CD4-positive, alpha-beta T cell (primary cell): ENCODE measurements at regions of chr3 and their contacts with region 1.

Region 1: GRCh38 chr3:105686278-105686897 is 182.4 kb downstream of the CBLB start:
- DNase-seq: peak in 3 of 14 experiments; percentile 52 to 59 (median 58)
- ATAC-seq: peak; percentile 57
- H3K4me3 ChIP-seq: no peak overlapping the region
- H3K4me3 Mint-ChIP-seq: no peak overlapping the region
- H3K27ac ChIP-seq: no peak overlapping the region
- H3K27ac Mint-ChIP-seq: peak overlapping the region; percentile 61
- H3K4me1 ChIP-seq: no peaks in the 10 kb centered on the region
- H3K4me1 Mint-ChIP-seq: peaks cover 28% of the 10 kb centered on the region
- H3K27me3 ChIP-seq: no peaks in the 10 kb centered on the region
- H3K27me3 Mint-ChIP-seq: no peaks in the 10 kb centered on the region
- CTCF ChIP-seq: peak; percentile 95

Region 2: GRCh38 chr3:105580296-105580965 is 106.0 kb before region 1 on chr3:
- CTCF ChIA-PET with region 1: no interaction called
- POLR2A ChIA-PET with region 1: no interaction called
- intact Hi-C with region 1: no loop called
- DNase-seq: no peak
- ATAC-seq: no peak
- H3K4me3 ChIP-seq: no peak overlapping the region
- H3K4me3 Mint-ChIP-seq: no peak overlapping the region
- H3K27ac ChIP-seq: no peak overlapping the region
- H3K27ac Mint-ChIP-seq: no peak overlapping the region
- H3K4me1 ChIP-seq: no peaks in the 10 kb centered on the region
- H3K4me1 Mint-ChIP-seq: no peaks in the 10 kb centered on the region
- H3K27me3 ChIP-seq: no peaks in the 10 kb centered on the region
- H3K27me3 Mint-ChIP-seq: no peaks in the 10 kb centered on the region
- CTCF ChIP-seq: no peak

Region 3: GRCh38 chr3:105674437-105675065 is 11.8 kb before region 1 on chr3:
- CTCF ChIA-PET with region 1: no interaction called
- POLR2A ChIA-PET with region 1: no interaction called
- intact Hi-C with region 1: no loop called
- DNase-seq: no peak
- ATAC-seq: no peak
- H3K4me3 ChIP-seq: no peak overlapping the region
- H3K4me3 Mint-ChIP-seq: no peak overlapping the region
- H3K27ac ChIP-seq: no peak overlapping the region
- H3K27ac Mint-ChIP-seq: peak overlapping the region; percentile 51
- H3K4me1 ChIP-seq: no peaks in the 10 kb centered on the region
- H3K4me1 Mint-ChIP-seq: peaks cover 6% of the 10 kb centered on the region
- H3K27me3 ChIP-seq: no peaks in the 10 kb centered on the region
- H3K27me3 Mint-ChIP-seq: no peaks in the 10 kb centered on the region
- CTCF ChIP-seq: no peak

Region 4: GRCh38 chr3:105704726-105705410 is 18.5 kb after region 1 on chr3:
- CTCF ChIA-PET with region 1: no interaction called
- POLR2A ChIA-PET with region 1: no interaction called
- intact Hi-C with region 1: no loop called
- DNase-seq: no peak
- ATAC-seq: no peak
- H3K4me3 ChIP-seq: no peak overlapping the region
- H3K4me3 Mint-ChIP-seq: no peak overlapping the region
- H3K27ac ChIP-seq: no peak overlapping the region
- H3K27ac Mint-ChIP-seq: peak overlapping the region; percentile 1
- H3K4me1 ChIP-seq: no peaks in the 10 kb centered on the region
- H3K4me1 Mint-ChIP-seq: peaks cover 19% of the 10 kb centered on the region
- H3K27me3 ChIP-seq: no peaks in the 10 kb centered on the region
- H3K27me3 Mint-ChIP-seq: no peaks in the 10 kb centered on the region
- CTCF ChIP-seq: no peak

Region 5: GRCh38 chr3:106206146-106206545 is 519.8 kb after region 1 on chr3:
- CTCF ChIA-PET with region 1: no interaction called
- POLR2A ChIA-PET with region 1: no interaction called
- intact Hi-C with region 1: loop called (anchors 1 to 5 kb)
- DNase-seq: peak in 4 of 14 experiments; percentile 26 to 68 (median 52)
- ATAC-seq: peak; percentile 80
- H3K4me3 ChIP-seq: peak overlapping the region; percentile 38
- H3K4me3 Mint-ChIP-seq: peak overlapping the region; percentile 62
- H3K27ac ChIP-seq: peak overlapping the region in 1 of 2 donors; percentile 3
- H3K27ac Mint-ChIP-seq: peak overlapping the region; percentile 69
- H3K4me1 ChIP-seq: peaks cover 7% of the 10 kb centered on the region
- H3K4me1 Mint-ChIP-seq: peaks cover 32% of the 10 kb centered on the region
- H3K27me3 ChIP-seq: no peaks in the 10 kb centered on the region
- H3K27me3 Mint-ChIP-seq: no peaks in the 10 kb centered on the region
- CTCF ChIP-seq: no peak

Region 6: DNA sequence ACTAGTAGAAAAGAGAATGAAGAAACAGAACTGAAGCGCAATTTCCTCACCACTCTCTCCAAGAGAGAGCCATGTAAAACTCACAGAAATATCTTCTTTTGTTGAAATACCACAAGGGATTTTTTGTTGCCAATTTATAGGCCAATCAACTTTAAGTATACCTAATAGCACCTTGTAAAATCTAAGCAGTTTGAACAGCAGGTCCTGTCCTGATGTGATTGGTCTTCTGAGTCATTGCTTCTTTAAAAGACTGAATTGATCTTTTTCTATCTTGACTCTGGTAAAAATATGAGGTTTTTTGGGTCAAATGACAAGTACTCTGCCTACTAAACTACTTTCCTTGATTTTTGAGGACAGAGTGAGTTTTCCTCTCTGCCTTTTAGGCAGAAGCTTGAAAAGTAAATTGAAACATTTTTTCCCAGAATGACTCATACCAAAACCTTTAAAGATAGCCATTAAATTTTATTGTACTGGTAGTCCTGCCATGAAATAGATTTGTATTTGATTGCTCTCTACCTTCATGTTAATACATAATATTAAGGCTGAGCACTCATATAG is 526.4 kb after region 1 on chr3:
- CTCF ChIA-PET with region 1: no interaction called
- POLR2A ChIA-PET with region 1: no interaction called
- intact Hi-C with region 1: loop called (anchors 1 to 5 kb)
- DNase-seq: no peak
- ATAC-seq: no peak
- H3K4me3 ChIP-seq: no peak overlapping the region
- H3K4me3 Mint-ChIP-seq: no peak overlapping the region
- H3K27ac ChIP-seq: no peak overlapping the region
- H3K27ac Mint-ChIP-seq: no peak overlapping the region
- H3K4me1 ChIP-seq: no peaks in the 10 kb centered on the region
- H3K4me1 Mint-ChIP-seq: peaks cover 14% of the 10 kb centered on the region
- H3K27me3 ChIP-seq: no peaks in the 10 kb centered on the region
- H3K27me3 Mint-ChIP-seq: no peaks in the 10 kb centered on the region
- CTCF ChIP-seq: no peak

Region 7: GRCh38 chr3:106609666-106610301 is 923.4 kb after region 1 on chr3:
- CTCF ChIA-PET with region 1: interaction called, 4 read pairs
- POLR2A ChIA-PET with region 1: no interaction called
- intact Hi-C with region 1: loop called (anchors 1 to 2 kb)
- DNase-seq: peak; percentile 18 to 82 (median 47)
- ATAC-seq: peak; percentile 77
- H3K4me3 ChIP-seq: no peak overlapping the region
- H3K4me3 Mint-ChIP-seq: no peak overlapping the region
- H3K27ac ChIP-seq: no peak overlapping the region
- H3K27ac Mint-ChIP-seq: no peak overlapping the region
- H3K4me1 ChIP-seq: no peaks in the 10 kb centered on the region
- H3K4me1 Mint-ChIP-seq: no peaks in the 10 kb centered on the region
- H3K27me3 ChIP-seq: no peaks in the 10 kb centered on the region
- H3K27me3 Mint-ChIP-seq: no peaks in the 10 kb centered on the region
- CTCF ChIP-seq: peak; percentile 91

Region 8: GRCh38 chr3:107064445-107065060 is 1378.2 kb after region 1 on chr3:
- CTCF ChIA-PET with region 1: no interaction called
- POLR2A ChIA-PET with region 1: no interaction called
- intact Hi-C with region 1: loop called in 1 of 2 experiments (anchors 10 kb)
- DNase-seq: peak in 13 of 14 experiments; percentile 10 to 72 (median 26)
- ATAC-seq: peak; percentile 60
- H3K4me3 ChIP-seq: no peak overlapping the region
- H3K4me3 Mint-ChIP-seq: no peak overlapping the region
- H3K27ac ChIP-seq: no peak overlapping the region
- H3K27ac Mint-ChIP-seq: no peak overlapping the region
- H3K4me1 ChIP-seq: peaks cover 5% of the 10 kb centered on the region
- H3K4me1 Mint-ChIP-seq: peaks cover 11% of the 10 kb centered on the region
- H3K27me3 ChIP-seq: no peaks in the 10 kb centered on the region
- H3K27me3 Mint-ChIP-seq: peaks cover 11% of the 10 kb centered on the region
- CTCF ChIP-seq: peak; percentile 85